Activated B cell treated with CpG ODN at 0.5 μM for 24 hours (primary cell): ENCODE measurements at regions of chr5 and their contacts with region 1.

Region 1: GRCh38 chr5:74766849-74767578 is at the starts of genes GFM2 and NSA2:
- DNase-seq: peak; percentile 89
- ATAC-seq: peak; percentile 88
- H3K4me3 Mint-ChIP-seq: peak within 1 kb of the TSS; percentile 99
- H3K27ac Mint-ChIP-seq: peak within 1 kb of the TSS; percentile 98
- H3K4me1 Mint-ChIP-seq: peaks cover 36% of the 10 kb centered on the region
- H3K27me3 Mint-ChIP-seq: no peaks in the 10 kb centered on the region
- CTCF ChIP-seq: no peak
- total RNA-seq, gene GFM2: 19.3 and 21.8 TPM in 2 replicates
- total RNA-seq, gene NSA2: 126 and 132 TPM in 2 replicates

Region 2: GRCh38 chr5:73565139-73565968 is 1201.7 kb before region 1 on chr5 and contains the starts of genes ANKRA2 and UTP15:
- CTCF ChIA-PET with region 1: no interaction called
- POLR2A ChIA-PET with region 1: no interaction called
- intact Hi-C with region 1: loop called (anchors 1 kb)
- DNase-seq: peak; percentile 98
- ATAC-seq: peak; percentile 96
- H3K4me3 Mint-ChIP-seq: peak within 1 kb of the TSS; percentile 99
- H3K27ac Mint-ChIP-seq: peak within 1 kb of the TSS; percentile 100
- H3K4me1 Mint-ChIP-seq: peaks cover 37% of the 10 kb centered on the region
- H3K27me3 Mint-ChIP-seq: no peaks in the 10 kb centered on the region
- CTCF ChIP-seq: no peak
- total RNA-seq, gene ANKRA2: 17.7 and 22.9 TPM in 2 replicates
- total RNA-seq, gene UTP15: 35.7 and 40.4 TPM in 2 replicates

Region 3: GRCh38 chr5:74684900-74685851 is 81.8 kb before region 1 on chr5 and contains the start of gene HEXB:
- CTCF ChIA-PET with region 1: no interaction called
- POLR2A ChIA-PET with region 1: interaction called, 12 read pairs
- intact Hi-C with region 1: loop called (anchors 1 kb)
- DNase-seq: peak; percentile 77
- ATAC-seq: peak; percentile 86
- H3K4me3 Mint-ChIP-seq: peak within 1 kb of the TSS; percentile 81
- H3K27ac Mint-ChIP-seq: peak within 1 kb of the TSS; percentile 63
- H3K4me1 Mint-ChIP-seq: peaks cover 18% of the 10 kb centered on the region
- H3K27me3 Mint-ChIP-seq: no peaks in the 10 kb centered on the region
- CTCF ChIP-seq: no peak
- total RNA-seq, gene HEXB: 34.5 and 43.2 TPM in 2 replicates

Region 4: GRCh38 chr5:74903165-74903787 is 136.3 kb after region 1 on chr5:
- CTCF ChIA-PET with region 1: no interaction called
- POLR2A ChIA-PET with region 1: no interaction called
- intact Hi-C with region 1: loop called (anchors 1 kb)
- DNase-seq: no peak
- ATAC-seq: peak; percentile 52
- H3K4me3 Mint-ChIP-seq: no peak overlapping the region
- H3K27ac Mint-ChIP-seq: no peak overlapping the region
- H3K4me1 Mint-ChIP-seq: no peaks in the 10 kb centered on the region
- H3K27me3 Mint-ChIP-seq: no peaks in the 10 kb centered on the region
- CTCF ChIP-seq: no peak

Region 5: GRCh38 chr5:75336625-75337339 is 569.8 kb after region 1 on chr5 and contains the start of gene HMGCR:
- CTCF ChIA-PET with region 1: interaction called, 4 read pairs
- POLR2A ChIA-PET with region 1: interaction called, 13 read pairs
- intact Hi-C with region 1: loop called (anchors 1 kb)
- DNase-seq: peak; percentile 89
- ATAC-seq: peak; percentile 95
- H3K4me3 Mint-ChIP-seq: no peak within 1 kb of the TSS
- H3K27ac Mint-ChIP-seq: no peak within 1 kb of the TSS
- H3K4me1 Mint-ChIP-seq: peaks cover 30% of the 10 kb centered on the region
- H3K27me3 Mint-ChIP-seq: no peaks in the 10 kb centered on the region
- CTCF ChIP-seq: no peak
- total RNA-seq, gene HMGCR: 105 and 131 TPM in 2 replicates

Region 6: GRCh38 chr5:76175051-76175666 is 1408.1 kb after region 1 on chr5:
- CTCF ChIA-PET with region 1: no interaction called
- POLR2A ChIA-PET with region 1: no interaction called
- intact Hi-C with region 1: loop called (anchors 2 kb)
- DNase-seq: peak; percentile 16
- ATAC-seq: peak; percentile 57
- H3K4me3 Mint-ChIP-seq: peak overlapping the region; percentile 2
- H3K27ac Mint-ChIP-seq: no peak overlapping the region
- H3K4me1 Mint-ChIP-seq: peaks cover 15% of the 10 kb centered on the region
- H3K27me3 Mint-ChIP-seq: peaks cover 2% of the 10 kb centered on the region
- CTCF ChIP-seq: no peak